ENCODE measurements at regions of chr10 and their contacts with region 1.

Region 1: GRCh38 chr10:102009801-102010425 is 46.1 kb downstream of the ARMH3 start:
- DNase-seq: peak in 1 of 2 experiments; percentile 17
- H3K4me3 ChIP-seq: no peak overlapping the region
- H3K27ac ChIP-seq: no peak overlapping the region
- H3K4me1 ChIP-seq: peaks cover 0 to 5% (median 2%) of the 10 kb centered on the region in 4 experiments; a peak in 3 of 7 replicates
- H3K27me3 ChIP-seq: no peaks in the 10 kb centered on the region
- CTCF ChIP-seq: peak in 2 of 3 experiments; percentile 95 to 99; a peak in 3 of 4 replicates
- EP300 ChIP-seq: no peak
- POLR2A ChIP-seq: no peak
- RAD21 ChIP-seq: peak; percentile 99

Region 2: GRCh38 chr10:101617102-101617823 is 392.6 kb before region 1 on chr10:
- CTCF ChIA-PET with region 1: no interaction called
- POLR2A ChIA-PET with region 1: no interaction called
- DNase-seq: no peak
- H3K4me3 ChIP-seq: no peak overlapping the region
- H3K27ac ChIP-seq: no peak overlapping the region
- H3K4me1 ChIP-seq: peaks cover 5 to 17% (median 13%) of the 10 kb centered on the region in 4 experiments
- H3K27me3 ChIP-seq: no peaks in the 10 kb centered on the region
- CTCF ChIP-seq: peak; percentile 21 to 50 (median 37)
- EP300 ChIP-seq: no peak
- POLR2A ChIP-seq: no peak
- RAD21 ChIP-seq: peak; percentile 26 to 46; a peak in 3 of 4 replicates

Region 3: GRCh38 chr10:101710059-101710695 is 299.7 kb before region 1 on chr10:
- CTCF ChIA-PET with region 1: no interaction called
- POLR2A ChIA-PET with region 1: no interaction called
- DNase-seq: no peak
- H3K4me3 ChIP-seq: no peak overlapping the region
- H3K27ac ChIP-seq: no peak overlapping the region
- H3K4me1 ChIP-seq: no peaks in the 10 kb centered on the region
- H3K27me3 ChIP-seq: no peaks in the 10 kb centered on the region
- CTCF ChIP-seq: peak in 1 of 3 experiments; percentile 16; a peak in 1 of 4 replicates
- EP300 ChIP-seq: no peak
- POLR2A ChIP-seq: no peak
- RAD21 ChIP-seq: no peak; a peak in 1 of 4 replicates

Region 4: GRCh38 chr10:101858723-101859500 is 151.0 kb before region 1 on chr10:
- CTCF ChIA-PET with region 1: interaction called, 10 read pairs
- POLR2A ChIA-PET with region 1: no interaction called
- DNase-seq: no peak
- H3K4me3 ChIP-seq: no peak overlapping the region
- H3K27ac ChIP-seq: no peak overlapping the region
- H3K4me1 ChIP-seq: no peaks in the 10 kb centered on the region
- H3K27me3 ChIP-seq: no peaks in the 10 kb centered on the region
- CTCF ChIP-seq: no peak
- EP300 ChIP-seq: no peak
- POLR2A ChIP-seq: no peak
- RAD21 ChIP-seq: no peak

Region 5: GRCh38 chr10:101889256-101890210 is 120.4 kb before region 1 on chr10:
- CTCF ChIA-PET with region 1: interaction called, 210 read pairs
- POLR2A ChIA-PET with region 1: interaction called, 12 read pairs
- DNase-seq: peak; percentile 43 to 85
- H3K4me3 ChIP-seq: no peak overlapping the region
- H3K27ac ChIP-seq: no peak overlapping the region
- H3K4me1 ChIP-seq: no peaks in the 10 kb centered on the region
- H3K27me3 ChIP-seq: no peaks in the 10 kb centered on the region
- CTCF ChIP-seq: peak; percentile 26 to 90 (median 81)
- EP300 ChIP-seq: no peak
- POLR2A ChIP-seq: no peak
- RAD21 ChIP-seq: peak; percentile 86 to 94

Region 6: DNA sequence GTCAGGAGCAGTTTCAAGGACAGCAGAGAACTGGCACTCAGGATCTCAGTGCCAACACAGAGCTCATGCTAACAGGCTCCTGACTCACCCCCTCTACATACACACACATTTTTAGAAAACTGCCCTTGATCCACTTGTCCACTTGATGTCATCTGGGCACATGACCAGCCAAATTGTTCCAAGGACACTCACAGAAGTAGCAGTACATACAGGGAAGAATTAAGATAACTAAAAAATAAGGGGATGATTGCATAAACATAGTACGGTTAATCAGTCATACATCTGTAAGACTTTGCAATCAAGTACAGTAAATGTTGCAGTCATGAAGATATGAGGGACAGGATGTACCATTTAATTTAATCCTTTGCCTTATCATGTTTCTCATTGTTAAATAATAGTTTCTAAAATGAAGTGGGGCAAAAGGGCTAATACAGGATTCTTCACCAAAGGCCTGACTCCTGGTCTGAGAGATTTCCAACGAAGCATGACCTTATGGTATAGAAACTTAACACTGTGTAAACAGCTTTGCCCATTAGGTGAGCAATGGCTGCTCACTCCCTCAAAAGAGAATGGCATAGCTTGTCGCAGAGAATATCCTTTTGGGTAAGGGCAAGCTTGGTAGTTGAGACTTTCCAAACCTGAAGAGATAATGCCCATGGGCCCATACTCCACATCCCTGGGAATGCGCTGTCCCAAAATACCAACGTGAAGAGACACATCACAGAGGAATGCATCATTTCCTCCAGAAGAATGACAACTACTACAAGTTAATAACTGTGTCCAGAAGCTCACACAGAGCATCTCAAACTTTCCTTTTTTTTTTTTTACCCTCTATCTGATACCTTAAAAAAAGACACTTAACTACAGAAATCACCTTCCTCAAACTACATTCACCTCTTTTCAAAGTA is 48.1 kb before region 1 on chr10:
- CTCF ChIA-PET with region 1: interaction called, 15 read pairs
- POLR2A ChIA-PET with region 1: no interaction called
- DNase-seq: peak in 1 of 2 experiments; percentile 24
- H3K4me3 ChIP-seq: no peak overlapping the region
- H3K27ac ChIP-seq: no peak overlapping the region
- H3K4me1 ChIP-seq: no peaks in the 10 kb centered on the region
- H3K27me3 ChIP-seq: no peaks in the 10 kb centered on the region
- CTCF ChIP-seq: no peak
- EP300 ChIP-seq: no peak
- POLR2A ChIP-seq: no peak
- RAD21 ChIP-seq: no peak

Region 7: DNA sequence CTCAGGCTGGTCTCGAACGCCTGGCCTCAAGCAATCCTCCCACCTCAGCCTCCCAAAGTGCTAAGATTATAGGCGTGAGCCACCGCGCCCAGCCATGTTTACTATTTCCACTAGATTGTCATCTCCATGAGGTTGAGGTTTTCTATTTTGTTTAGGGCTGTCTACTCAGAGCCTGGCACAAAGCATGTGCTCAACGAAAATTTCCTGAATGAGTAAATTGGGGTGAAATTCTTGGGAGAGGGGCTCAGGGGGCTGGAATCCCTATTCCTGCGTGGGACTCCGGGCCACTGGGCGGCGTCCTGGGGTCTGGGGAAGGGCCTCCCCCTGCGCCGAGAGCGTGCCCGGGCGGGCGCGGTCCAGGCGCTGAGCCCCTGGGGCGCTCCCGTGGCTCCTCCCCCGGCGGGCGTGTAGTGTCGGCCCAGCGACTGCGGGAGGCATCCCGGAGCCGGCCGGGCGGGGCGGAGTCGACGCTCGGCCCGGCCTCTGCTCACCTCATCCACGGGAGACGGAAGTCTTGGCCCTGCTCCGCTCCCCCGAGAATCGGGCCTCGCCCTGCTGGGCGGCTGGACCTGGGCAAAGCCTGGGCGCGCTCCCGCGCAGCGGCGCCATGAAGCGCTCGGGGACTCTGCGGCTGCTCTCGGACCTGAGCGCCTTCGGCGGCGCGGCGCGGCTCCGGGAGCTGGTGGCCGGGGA is 55.1 kb after region 1 on chr10 and contains the start of gene HPS6:
- CTCF ChIA-PET with region 1: interaction called, 16 read pairs
- POLR2A ChIA-PET with region 1: no interaction called
- DNase-seq: peak in 1 of 2 experiments; percentile 85
- H3K4me3 ChIP-seq: peak within 1 kb of the TSS; percentile 71 to 86 (median 77)
- H3K27ac ChIP-seq: no peak within 1 kb of the TSS
- H3K4me1 ChIP-seq: peaks cover 0 to 5% (median 4%) of the 10 kb centered on the region in 4 experiments; a peak in 5 of 7 replicates
- H3K27me3 ChIP-seq: peaks cover 0 to 3% (median 1%) of the 10 kb centered on the region in 4 experiments; a peak in 1 of 7 replicates
- CTCF ChIP-seq: no peak
- EP300 ChIP-seq: no peak
- POLR2A ChIP-seq: peak in 1 of 2 experiments; percentile 51; a peak in 1 of 3 replicates
- RAD21 ChIP-seq: no peak
- total RNA-seq, gene HPS6: 16.2 and 17.7 TPM in 2 replicates